ENCODE measurements at regions of chrX and their contacts with region 1.

Region 1: GRCh38 chrX:50747471-50747900 is 66.5 kb downstream of the SHROOM4 start:
- DNase-seq: peak; percentile 31 to 64 (median 60)
- H3K4me3 ChIP-seq: no peak overlapping the region
- H3K27ac ChIP-seq: no peak overlapping the region
- H3K4me1 ChIP-seq: peaks cover 0 to 4% (median 0%) of the 10 kb centered on the region in 4 experiments
- H3K27me3 ChIP-seq: no peaks in the 10 kb centered on the region

Region 2: DNA sequence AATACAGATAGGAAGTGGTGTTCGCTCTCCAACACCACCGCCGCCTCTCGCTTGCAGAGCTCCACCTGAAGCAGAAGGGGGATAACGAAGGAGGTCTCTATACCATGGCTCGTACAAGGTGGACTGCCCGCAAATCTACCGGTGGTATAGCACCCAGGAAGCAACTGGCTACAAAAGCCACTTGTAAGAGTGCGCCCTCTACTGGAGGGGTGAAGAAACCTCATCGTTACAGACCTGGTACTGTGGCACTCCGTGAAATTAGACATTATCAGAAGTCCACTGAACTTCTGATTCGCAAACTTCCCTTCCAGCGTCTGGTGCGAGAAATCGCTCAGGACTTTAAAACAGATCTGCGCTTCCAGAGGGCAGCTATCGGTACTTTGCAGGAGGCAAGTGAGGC is 157.8 kb after region 1 on chrX:
- CTCF ChIA-PET with region 1: interaction called, 80 read pairs
- POLR2A ChIA-PET with region 1: no interaction called
- DNase-seq: peak in 2 of 3 donors; percentile 22 to 25
- H3K4me3 ChIP-seq: no peak overlapping the region
- H3K27ac ChIP-seq: no peak overlapping the region
- H3K4me1 ChIP-seq: no peaks in the 10 kb centered on the region
- H3K27me3 ChIP-seq: peaks cover 0 to 2% (median 0%) of the 10 kb centered on the region in 5 experiments

Measured in common myeloid progenitor, CD34-positive (primary cell).